Calu3 (cell line): ENCODE measurements at regions of chr5 and their contacts with region 1.

Region 1: DNA sequence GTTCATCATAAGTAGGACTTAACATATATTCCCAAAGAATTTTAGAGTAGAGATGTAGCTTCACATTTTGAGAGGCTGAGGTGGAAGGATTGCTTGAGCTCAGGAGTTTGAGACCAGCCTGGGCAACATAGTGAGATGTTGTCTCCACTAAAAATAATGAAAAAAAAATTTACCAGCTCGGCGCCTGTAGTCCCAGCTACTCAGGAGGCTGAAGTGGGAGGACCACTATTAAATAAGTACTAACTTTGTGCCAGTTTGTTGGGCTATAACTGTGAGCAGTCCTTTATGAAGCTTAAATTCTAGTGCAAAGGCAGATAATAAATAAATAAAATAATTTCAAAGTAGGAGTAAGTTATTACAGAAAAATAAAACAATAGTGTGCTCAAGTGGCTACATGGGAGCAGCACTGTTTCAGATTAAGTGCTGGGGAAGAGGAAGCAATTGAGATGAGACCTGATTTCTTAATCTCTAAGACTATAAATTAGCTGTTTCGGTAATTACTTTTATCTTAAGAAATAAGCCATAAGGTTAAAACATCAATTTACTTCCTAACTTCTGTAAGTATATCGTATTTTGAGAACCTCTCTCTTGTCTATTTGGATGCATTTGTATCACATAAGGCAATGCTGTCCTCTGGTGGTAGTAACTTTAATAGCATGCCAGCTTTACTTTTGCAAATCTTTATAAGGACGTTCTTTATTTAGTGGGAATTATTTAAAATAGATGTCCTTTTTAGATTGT is 98.9 kb downstream of the CSNK1G3 start:
- DNase-seq: peak; percentile 55
- H3K4me3 Mint-ChIP-seq: no peak overlapping the region
- H3K27ac Mint-ChIP-seq: no peak overlapping the region
- H3K4me1 Mint-ChIP-seq: no peaks in the 10 kb centered on the region
- H3K27me3 Mint-ChIP-seq: no peaks in the 10 kb centered on the region
- CTCF ChIP-seq: peak; percentile 82

Region 2: DNA sequence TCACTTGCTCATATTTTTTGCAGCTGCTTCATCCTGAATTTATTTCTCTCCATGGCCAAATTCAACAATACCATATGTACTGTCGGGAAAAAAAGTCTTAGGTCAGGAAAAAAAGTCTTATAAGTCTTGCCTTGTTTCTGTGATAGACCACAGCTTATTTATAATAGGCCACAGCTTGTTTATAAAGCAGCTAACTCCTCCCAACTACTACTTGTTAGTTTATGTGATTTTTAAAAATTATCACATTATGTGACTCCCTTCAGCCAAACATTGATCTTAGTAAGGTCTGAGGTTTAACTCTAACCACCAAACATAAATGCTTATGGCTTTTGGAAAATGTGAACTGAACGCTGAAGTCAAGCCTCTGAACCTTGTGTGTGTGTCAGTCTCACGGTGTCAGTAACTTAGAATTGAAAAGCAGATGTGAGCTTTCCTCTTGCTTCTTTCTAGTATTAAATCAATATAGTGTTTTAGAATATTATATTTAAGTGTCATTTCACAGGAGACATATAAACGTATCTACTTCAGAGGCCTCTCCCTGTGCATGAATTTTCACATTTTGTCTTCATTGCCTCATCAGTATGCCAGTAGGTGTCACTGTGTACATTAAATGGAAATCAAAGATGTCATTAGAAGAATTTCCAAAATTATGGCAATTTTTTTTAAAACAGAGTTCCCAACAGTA is 714.1 kb before region 1 on chr5:
- CTCF ChIA-PET with region 1: no interaction called
- intact Hi-C with region 1: loop called (anchors 2 kb)
- DNase-seq: no peak
- H3K4me3 Mint-ChIP-seq: no peak overlapping the region
- H3K27ac Mint-ChIP-seq: no peak overlapping the region
- H3K4me1 Mint-ChIP-seq: peaks cover 4% of the 10 kb centered on the region
- H3K27me3 Mint-ChIP-seq: no peaks in the 10 kb centered on the region
- CTCF ChIP-seq: peak; percentile 46

Region 3: GRCh38 chr5:123180178-123180577 is 430.7 kb before region 1 on chr5:
- CTCF ChIA-PET with region 1: no interaction called
- intact Hi-C with region 1: no loop called
- DNase-seq: no peak
- H3K4me3 Mint-ChIP-seq: no peak overlapping the region
- H3K27ac Mint-ChIP-seq: no peak overlapping the region
- H3K4me1 Mint-ChIP-seq: no peaks in the 10 kb centered on the region
- H3K27me3 Mint-ChIP-seq: no peaks in the 10 kb centered on the region
- CTCF ChIP-seq: no peak

Region 4: DNA sequence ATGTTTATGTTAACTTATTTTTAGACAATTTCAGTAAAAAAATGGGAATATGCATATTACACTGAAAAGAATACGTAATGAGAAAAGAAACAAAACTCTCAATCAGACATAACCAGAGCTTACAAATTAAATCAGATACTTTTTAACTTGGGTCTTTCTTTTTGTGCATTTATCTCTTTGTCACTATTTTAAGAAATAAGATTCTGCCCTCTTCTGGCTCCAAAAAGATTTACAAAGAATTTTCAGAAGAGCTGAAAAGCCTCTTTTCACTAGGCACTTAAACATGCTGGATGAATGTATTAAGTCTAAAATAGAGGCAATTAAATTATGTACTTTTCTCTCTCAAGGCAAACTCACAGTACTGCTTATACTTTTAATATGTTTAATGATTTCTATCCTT is 243.1 kb before region 1 on chr5:
- CTCF ChIA-PET with region 1: no interaction called
- intact Hi-C with region 1: loop called (anchors 5 kb)
- DNase-seq: no peak
- H3K4me3 Mint-ChIP-seq: no peak overlapping the region
- H3K27ac Mint-ChIP-seq: no peak overlapping the region
- H3K4me1 Mint-ChIP-seq: no peaks in the 10 kb centered on the region
- H3K27me3 Mint-ChIP-seq: no peaks in the 10 kb centered on the region
- CTCF ChIP-seq: peak; percentile 30

Region 5: GRCh38 chr5:123423278-123424149 is 187.3 kb before region 1 on chr5 and contains the start of gene CEP120:
- CTCF ChIA-PET with region 1: interaction called, 19 read pairs
- intact Hi-C with region 1: loop called (anchors 2 kb)
- DNase-seq: peak; percentile 98
- H3K4me3 Mint-ChIP-seq: no peak within 1 kb of the TSS
- H3K27ac Mint-ChIP-seq: no peak within 1 kb of the TSS
- H3K4me1 Mint-ChIP-seq: peaks cover 22% of the 10 kb centered on the region
- H3K27me3 Mint-ChIP-seq: no peaks in the 10 kb centered on the region
- CTCF ChIP-seq: peak; percentile 80
- total RNA-seq, gene CEP120: 25.0 and 27.1 TPM in 2 replicates

Region 6: DNA sequence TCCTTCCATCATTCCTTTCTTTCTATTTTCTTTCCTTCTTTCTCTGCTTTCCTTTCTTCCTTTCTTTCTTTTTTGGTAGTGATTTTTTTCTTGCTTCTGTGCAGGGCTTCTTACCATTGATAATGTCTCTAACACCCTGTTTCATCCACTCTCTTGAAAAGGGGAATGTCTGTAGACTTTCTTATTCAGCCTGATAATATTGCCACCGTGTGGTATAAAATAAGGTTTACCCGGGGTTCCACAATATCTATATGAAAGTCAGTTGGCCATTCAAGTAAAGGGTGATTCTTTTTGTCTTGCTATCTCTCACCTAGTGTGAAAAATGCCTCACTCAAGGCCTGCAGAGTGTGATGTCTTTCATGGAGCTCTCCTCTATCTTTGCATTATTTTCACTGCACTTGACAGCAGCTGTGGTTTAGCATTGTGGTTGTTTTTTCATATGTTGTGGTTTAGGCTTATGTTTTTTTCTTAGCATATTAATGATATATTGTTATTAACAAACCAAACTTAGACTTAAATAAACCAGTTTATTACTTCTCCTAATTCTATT is 55.1 kb after region 1 on chr5:
- CTCF ChIA-PET with region 1: no interaction called
- intact Hi-C with region 1: no loop called
- DNase-seq: no peak
- H3K4me3 Mint-ChIP-seq: no peak overlapping the region
- H3K27ac Mint-ChIP-seq: no peak overlapping the region
- H3K4me1 Mint-ChIP-seq: no peaks in the 10 kb centered on the region
- H3K27me3 Mint-ChIP-seq: peaks cover 2% of the 10 kb centered on the region
- CTCF ChIP-seq: peak; percentile 39

Region 7: GRCh38 chr5:123951186-123951977 is 340.5 kb after region 1 on chr5:
- CTCF ChIA-PET with region 1: no interaction called
- intact Hi-C with region 1: no loop called
- DNase-seq: peak; percentile 65
- H3K4me3 Mint-ChIP-seq: peak overlapping the region; percentile 16
- H3K27ac Mint-ChIP-seq: no peak overlapping the region
- H3K4me1 Mint-ChIP-seq: peaks cover 19% of the 10 kb centered on the region
- H3K27me3 Mint-ChIP-seq: peaks cover 37% of the 10 kb centered on the region
- CTCF ChIP-seq: no peak